ENCODE measurements at regions of chrX and their contacts with region 1.

Region 1: DNA sequence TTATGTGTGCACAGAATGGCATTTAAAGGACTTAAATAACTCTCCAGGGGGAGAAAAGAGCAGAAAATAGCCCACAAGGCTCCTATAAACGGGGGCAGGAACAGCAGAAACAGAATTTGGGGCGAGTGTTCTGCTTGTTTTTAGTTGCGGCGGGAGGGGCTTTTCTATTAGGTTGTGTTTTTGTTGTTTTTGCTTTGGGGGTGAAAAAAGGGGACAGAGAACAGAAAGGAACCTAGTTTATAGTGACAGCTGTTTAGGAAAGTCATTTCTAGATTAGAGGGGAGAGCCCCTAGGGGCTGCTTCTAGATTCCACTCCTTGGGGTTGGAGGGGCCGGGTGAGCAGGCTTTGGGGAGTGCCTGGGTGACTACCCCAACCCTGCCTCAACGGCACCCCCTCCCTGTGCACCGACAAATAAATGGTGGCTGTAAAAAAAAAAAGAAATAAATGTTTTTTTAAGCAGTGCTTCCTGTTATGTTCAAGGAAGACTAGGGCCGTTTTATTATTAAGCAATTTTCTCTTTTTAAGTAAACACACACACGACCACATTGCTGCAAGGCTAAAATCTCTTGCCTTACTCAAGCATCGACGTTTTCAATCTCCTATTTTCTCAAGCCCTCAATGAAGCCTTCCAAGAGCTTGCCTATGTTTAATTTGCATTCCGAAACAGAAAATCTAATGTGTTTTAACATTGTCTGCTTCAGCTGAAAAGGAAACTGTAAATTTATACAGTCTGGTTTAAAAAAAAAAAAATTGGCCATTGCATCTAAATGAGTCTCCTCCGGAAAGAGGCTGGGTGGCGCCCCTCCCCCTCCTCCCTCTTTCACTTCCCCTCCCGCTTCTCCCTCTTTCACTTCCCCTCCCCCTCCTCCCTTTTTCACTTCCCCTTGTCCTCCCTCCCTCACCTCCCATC is 123.3 kb upstream of the TBL1X start:
- DNase-seq: peak in 8 of 9 donors; percentile 46 to 74 (median 64)
- ATAC-seq: peak; percentile 70
- H3K4me3 ChIP-seq: peak overlapping the region; percentile 62
- H3K4me3 Mint-ChIP-seq: peak overlapping the region; percentile 70 to 88 (median 86)
- H3K27ac ChIP-seq: peak overlapping the region; percentile 74
- H3K27ac Mint-ChIP-seq: peak overlapping the region; percentile 94 to 98 (median 96)
- H3K4me1 ChIP-seq: peaks cover 9 to 27% of the 10 kb centered on the region in 2 donors
- H3K4me1 Mint-ChIP-seq: peaks cover 11 to 57% (median 35%) of the 10 kb centered on the region in 7 donors
- H3K27me3 ChIP-seq: no peaks in the 10 kb centered on the region
- H3K27me3 Mint-ChIP-seq: no peaks in the 10 kb centered on the region

Region 2: GRCh38 chrX:8971116-8971515 is 370.4 kb before region 1 on chrX:
- CTCF ChIA-PET with region 1: no interaction called
- POLR2A ChIA-PET with region 1: interaction called, 3 read pairs
- intact Hi-C with region 1: loop called in 1 of 2 experiments (anchors 2 kb)
- DNase-seq: peak in 7 of 9 donors; percentile 18 to 59 (median 41)
- ATAC-seq: peak; percentile 49
- H3K4me3 ChIP-seq: no peak overlapping the region
- H3K4me3 Mint-ChIP-seq: no peak overlapping the region
- H3K27ac ChIP-seq: no peak overlapping the region
- H3K27ac Mint-ChIP-seq: peak overlapping the region in 3 of 9 donors; percentile 33 to 72 (median 33)
- H3K4me1 ChIP-seq: no peaks in the 10 kb centered on the region
- H3K4me1 Mint-ChIP-seq: peaks cover 0 to 2% (median 0%) of the 10 kb centered on the region in 7 donors
- H3K27me3 ChIP-seq: no peaks in the 10 kb centered on the region
- H3K27me3 Mint-ChIP-seq: no peaks in the 10 kb centered on the region

Region 3: DNA sequence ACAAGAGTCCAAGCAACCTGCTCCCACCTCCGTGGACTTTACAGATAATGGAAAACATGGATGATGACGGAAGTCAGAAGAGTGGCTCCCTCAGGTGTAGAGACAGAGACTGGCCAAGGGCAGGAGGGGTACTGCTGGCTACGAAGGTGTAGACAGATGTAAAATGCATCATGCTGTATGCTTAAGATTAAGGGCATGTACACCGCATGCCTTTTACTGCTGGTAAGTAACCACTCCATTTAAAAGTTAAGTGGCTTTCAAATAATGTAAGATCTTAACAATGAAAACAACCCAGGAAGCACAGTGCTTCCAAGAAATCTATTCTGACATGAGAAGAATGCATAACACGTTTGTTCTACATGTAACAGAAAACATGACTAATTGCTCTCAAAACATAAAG is 230.7 kb before region 1 on chrX:
- CTCF ChIA-PET with region 1: no interaction called
- POLR2A ChIA-PET with region 1: no interaction called
- intact Hi-C with region 1: no loop called
- DNase-seq: no peak
- ATAC-seq: no peak
- H3K4me3 ChIP-seq: no peak overlapping the region
- H3K4me3 Mint-ChIP-seq: no peak overlapping the region
- H3K27ac ChIP-seq: no peak overlapping the region
- H3K27ac Mint-ChIP-seq: no peak overlapping the region
- H3K4me1 ChIP-seq: no peaks in the 10 kb centered on the region
- H3K4me1 Mint-ChIP-seq: peaks cover 0 to 6% (median 0%) of the 10 kb centered on the region in 7 donors
- H3K27me3 ChIP-seq: no peaks in the 10 kb centered on the region
- H3K27me3 Mint-ChIP-seq: no peaks in the 10 kb centered on the region

Region 4: DNA sequence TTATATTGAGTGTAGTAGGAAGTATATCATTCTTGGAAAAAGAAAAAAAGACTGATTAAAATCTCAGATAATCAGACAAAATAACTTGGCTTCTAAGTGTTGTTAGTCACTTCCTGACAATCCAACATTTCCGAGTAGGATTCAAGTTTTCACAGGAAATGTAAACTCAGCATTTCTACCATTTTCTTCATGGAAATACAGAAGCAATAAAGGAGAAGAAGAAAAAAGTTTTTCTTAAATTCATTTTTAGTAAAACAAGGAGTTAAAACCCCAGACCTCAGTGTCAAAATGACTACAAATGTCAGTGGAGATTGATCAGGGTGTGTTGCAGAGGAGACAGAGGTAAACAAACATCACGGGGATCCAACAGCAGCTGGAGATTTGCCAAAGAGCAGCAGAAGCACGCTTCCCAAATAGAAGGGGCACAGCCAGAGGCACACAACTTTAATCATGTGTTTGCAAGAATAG is 178.3 kb before region 1 on chrX:
- CTCF ChIA-PET with region 1: no interaction called
- POLR2A ChIA-PET with region 1: no interaction called
- intact Hi-C with region 1: loop called (anchors 1 to 5 kb)
- DNase-seq: no peak
- ATAC-seq: no peak
- H3K4me3 ChIP-seq: no peak overlapping the region
- H3K4me3 Mint-ChIP-seq: no peak overlapping the region
- H3K27ac ChIP-seq: no peak overlapping the region
- H3K27ac Mint-ChIP-seq: peak overlapping the region in 1 of 9 donors; percentile 9
- H3K4me1 ChIP-seq: peaks cover 0 to 3% of the 10 kb centered on the region in 2 donors
- H3K4me1 Mint-ChIP-seq: peaks cover 0 to 39% (median 16%) of the 10 kb centered on the region in 7 donors
- H3K27me3 ChIP-seq: no peaks in the 10 kb centered on the region
- H3K27me3 Mint-ChIP-seq: peaks cover 0 to 5% (median 0%) of the 10 kb centered on the region in 5 donors

Region 5: DNA sequence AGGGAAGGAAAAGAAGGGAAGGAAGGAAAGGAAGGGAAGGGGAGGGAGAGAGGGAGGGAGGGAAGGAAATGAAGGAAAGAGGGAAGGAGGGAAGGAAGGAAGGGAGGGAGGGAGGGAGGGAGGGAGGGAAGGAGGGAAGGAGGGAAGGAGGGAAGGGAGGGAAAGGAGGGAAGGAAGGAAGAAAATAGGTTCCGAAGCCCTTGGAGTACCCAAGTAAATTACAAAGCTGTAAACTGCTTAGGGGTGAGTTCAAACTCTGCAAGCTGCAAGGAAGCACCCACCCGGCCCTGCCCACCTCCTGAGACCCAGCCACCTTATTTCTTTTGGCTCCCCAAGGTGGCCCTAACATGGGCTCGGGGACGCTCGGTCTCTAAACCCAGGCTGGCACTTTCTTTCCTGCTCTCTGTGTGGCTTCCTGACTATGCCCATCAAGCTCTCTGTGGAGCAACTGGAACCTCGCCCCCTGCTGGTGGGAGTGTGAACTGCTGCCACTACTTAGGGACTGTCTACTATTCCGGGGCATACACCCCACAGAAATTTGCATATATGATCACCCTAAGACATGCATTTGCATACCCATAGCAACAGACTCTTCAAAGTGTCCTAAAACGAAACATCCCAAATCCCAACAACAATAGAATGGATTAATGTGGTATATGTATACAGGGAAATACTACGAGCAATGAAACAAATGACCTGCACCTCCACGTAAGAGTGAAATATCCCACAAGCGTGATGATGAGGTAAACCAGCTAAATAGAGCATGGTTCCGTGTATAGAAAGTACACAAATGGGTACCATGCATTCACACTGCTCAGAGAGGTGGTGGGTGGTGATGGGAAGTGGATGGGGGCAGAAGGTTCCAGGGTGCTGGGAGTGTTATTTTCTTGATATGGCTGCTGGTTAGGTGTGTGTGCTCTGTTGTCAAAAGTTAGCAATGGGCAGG is 28.4 kb before region 1 on chrX:
- CTCF ChIA-PET with region 1: interaction called, 4 read pairs
- POLR2A ChIA-PET with region 1: no interaction called
- intact Hi-C with region 1: loop called in 1 of 2 experiments (anchors 1 kb)
- DNase-seq: peak; percentile 12 to 69 (median 57)
- ATAC-seq: peak; percentile 83
- H3K4me3 ChIP-seq: no peak overlapping the region
- H3K4me3 Mint-ChIP-seq: peak overlapping the region in 2 of 10 donors; percentile 50 to 56
- H3K27ac ChIP-seq: no peak overlapping the region
- H3K27ac Mint-ChIP-seq: peak overlapping the region in 3 of 9 donors; percentile 26 to 75 (median 66)
- H3K4me1 ChIP-seq: peaks cover 4 to 6% of the 10 kb centered on the region in 2 donors
- H3K4me1 Mint-ChIP-seq: peaks cover 10 to 21% (median 11%) of the 10 kb centered on the region in 7 donors
- H3K27me3 ChIP-seq: no peaks in the 10 kb centered on the region
- H3K27me3 Mint-ChIP-seq: no peaks in the 10 kb centered on the region

Region 6: DNA sequence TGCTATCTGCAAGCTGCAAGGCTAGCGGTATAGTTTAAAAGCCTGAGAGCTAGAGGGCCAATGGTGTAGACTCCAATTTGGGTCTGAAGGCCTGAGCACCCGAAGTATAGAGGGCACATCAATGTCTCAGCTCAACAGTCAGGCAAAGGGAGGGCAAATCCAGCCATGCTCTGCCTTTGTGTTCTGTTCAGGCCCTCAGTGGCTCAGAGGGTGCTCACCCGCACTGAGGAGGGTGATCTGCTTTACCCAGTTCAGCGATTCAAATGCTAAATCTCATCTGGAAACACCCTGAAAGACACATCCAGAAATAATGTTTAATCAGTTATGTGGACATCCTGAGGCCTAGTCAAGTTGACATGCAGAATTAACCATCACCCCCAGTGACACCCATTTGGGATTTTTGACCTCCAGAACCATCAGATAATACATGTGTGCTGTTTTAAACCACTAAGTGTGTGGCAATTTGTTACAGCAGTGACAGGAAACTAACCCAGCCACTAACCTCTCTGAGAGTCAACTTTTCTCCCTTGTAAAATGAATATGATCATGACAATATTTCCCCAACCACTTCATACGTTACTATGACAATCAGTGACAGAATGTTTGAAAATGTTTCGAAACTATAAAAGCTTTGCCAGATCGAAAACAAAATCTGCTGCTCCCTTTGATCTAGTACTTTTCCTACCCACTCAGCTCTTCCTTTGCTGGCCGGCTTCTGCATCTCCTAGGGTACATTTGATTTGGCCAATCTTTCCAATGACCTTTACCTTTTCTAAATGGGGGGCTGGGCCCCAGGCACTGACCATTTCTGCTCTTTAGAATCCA is 114.9 kb after region 1 on chrX:
- CTCF ChIA-PET with region 1: interaction called, 3 read pairs
- POLR2A ChIA-PET with region 1: no interaction called
- intact Hi-C with region 1: loop called in 1 of 2 experiments (anchors 1 kb)
- DNase-seq: peak in 8 of 9 donors; percentile 8 to 87 (median 81)
- ATAC-seq: peak; percentile 96
- H3K4me3 ChIP-seq: peak overlapping the region; percentile 11
- H3K4me3 Mint-ChIP-seq: peak overlapping the region; percentile 36 to 79 (median 64)
- H3K27ac ChIP-seq: peak overlapping the region; percentile 88
- H3K27ac Mint-ChIP-seq: peak overlapping the region; percentile 77 to 99 (median 96)
- H3K4me1 ChIP-seq: peaks cover 9 to 20% of the 10 kb centered on the region in 2 donors
- H3K4me1 Mint-ChIP-seq: peaks cover 5 to 47% (median 33%) of the 10 kb centered on the region in 7 donors
- H3K27me3 ChIP-seq: no peaks in the 10 kb centered on the region
- H3K27me3 Mint-ChIP-seq: no peaks in the 10 kb centered on the region

Region 7: DNA sequence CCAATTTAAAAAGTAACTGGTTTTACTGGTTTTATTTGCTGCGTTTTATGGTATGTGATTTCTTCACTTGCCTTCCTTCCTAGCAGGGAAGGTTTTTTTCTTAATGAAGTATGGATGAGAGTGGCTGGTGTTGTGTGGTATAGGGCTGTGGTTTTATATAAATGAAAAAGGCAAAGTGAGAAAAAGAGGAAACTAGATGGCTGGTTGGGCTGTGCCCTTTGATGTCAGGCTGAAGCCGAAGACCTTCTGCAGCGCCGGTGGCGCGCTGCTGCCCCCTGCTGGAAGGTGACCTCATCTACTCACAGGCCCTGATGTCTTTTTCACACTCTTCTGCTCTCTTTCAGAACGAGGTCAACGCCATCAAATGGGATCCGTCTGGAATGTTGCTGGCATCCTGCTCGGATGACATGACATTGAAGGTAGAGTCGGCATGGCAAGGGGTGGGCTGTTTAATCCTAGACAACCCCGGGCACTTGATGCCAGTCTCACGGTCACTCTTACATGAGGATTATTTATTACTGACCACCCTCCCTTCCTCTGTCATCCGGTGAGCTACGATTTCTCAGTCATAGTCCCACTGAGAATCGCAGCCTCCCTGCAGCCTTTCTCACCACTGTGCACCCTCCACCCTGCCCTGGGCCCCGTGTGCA is 367.5 kb after region 1 on chrX:
- CTCF ChIA-PET with region 1: no interaction called
- POLR2A ChIA-PET with region 1: no interaction called
- intact Hi-C with region 1: loop called (anchors 1 to 2 kb)
- DNase-seq: peak; percentile 62 to 84 (median 76)
- ATAC-seq: peak; percentile 95
- H3K4me3 ChIP-seq: no peak overlapping the region
- H3K4me3 Mint-ChIP-seq: peak overlapping the region in 4 of 10 donors; percentile 1 to 42 (median 16)
- H3K27ac ChIP-seq: no peak overlapping the region
- H3K27ac Mint-ChIP-seq: peak overlapping the region in 7 of 9 donors; percentile 7 to 84 (median 49)
- H3K4me1 ChIP-seq: peaks cover 0 to 5% of the 10 kb centered on the region in 2 donors
- H3K4me1 Mint-ChIP-seq: peaks cover 0 to 16% (median 10%) of the 10 kb centered on the region in 7 donors
- H3K27me3 ChIP-seq: no peaks in the 10 kb centered on the region
- H3K27me3 Mint-ChIP-seq: no peaks in the 10 kb centered on the region